ENCODE measurements at regions of chr7 and their contacts with region 1.

Region 1: DNA sequence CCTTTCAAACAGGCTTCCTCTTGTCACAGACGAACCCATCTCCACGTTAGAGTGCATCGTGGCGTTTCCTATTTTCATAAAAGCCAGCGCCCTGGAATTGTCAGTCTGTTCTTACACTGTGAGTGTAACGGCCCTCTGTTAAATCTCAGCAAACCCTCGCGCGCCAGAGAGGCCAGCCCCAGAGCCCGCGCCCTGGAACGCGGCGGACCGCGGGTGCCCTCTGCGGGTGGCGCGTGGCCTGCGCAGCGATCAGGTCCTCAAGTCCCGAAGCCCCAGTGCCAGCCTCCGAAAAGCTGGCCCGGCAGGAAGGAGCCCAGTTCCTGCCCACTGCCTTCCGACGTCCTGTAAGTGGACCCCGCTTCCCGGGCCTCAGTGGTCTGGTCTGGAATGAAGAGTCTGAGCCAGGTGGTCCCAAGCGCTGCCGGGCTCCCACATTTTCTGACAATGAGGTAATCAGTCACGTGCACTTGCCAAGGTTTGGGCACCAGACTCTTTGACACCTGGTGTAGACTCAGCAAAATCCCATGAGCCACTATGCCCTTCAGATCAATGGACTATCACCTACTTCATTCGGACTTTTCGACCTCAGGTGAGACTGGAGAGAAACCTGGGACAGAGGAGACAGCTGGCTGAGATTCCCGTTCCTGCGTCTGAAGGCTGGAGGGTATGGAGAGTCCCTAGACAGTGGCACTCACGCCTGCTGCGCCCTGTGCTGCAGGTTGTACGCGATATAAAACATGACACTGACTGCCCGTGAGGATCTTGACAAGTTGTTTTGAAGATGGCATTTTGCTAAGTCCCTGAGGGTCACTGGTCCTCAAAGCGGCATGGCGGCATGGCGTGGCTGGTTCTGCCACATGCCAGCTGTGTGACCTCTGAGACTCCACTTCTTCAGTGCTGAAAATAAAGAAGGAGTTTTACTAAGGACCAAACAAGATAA is 109.4 kb upstream of the LANCL2 start:
- DNase-seq: peak; percentile 93
- H3K4me3 ChIP-seq: peak overlapping the region; percentile 56 to 67
- H3K27ac ChIP-seq: peak overlapping the region; percentile 50 to 58; a peak in 3 of 4 replicates
- H3K4me1 ChIP-seq: peaks cover 0 to 15% of the 10 kb centered on the region in 2 experiments; a peak in 1 of 4 replicates
- H3K27me3 ChIP-seq: no peaks in the 10 kb centered on the region
- CTCF ChIP-seq: peak; percentile 99
- EP300 ChIP-seq: no peak
- RAD21 ChIP-seq: peak; percentile 99

Region 2: GRCh38 chr7:54839538-54840213 is 416.1 kb before region 1 on chr7:
- CTCF ChIA-PET with region 1: interaction called, 83 read pairs
- POLR2A ChIA-PET with region 1: no interaction called
- DNase-seq: peak; percentile 78
- H3K4me3 ChIP-seq: no peak overlapping the region
- H3K27ac ChIP-seq: no peak overlapping the region
- H3K4me1 ChIP-seq: peaks cover 3 to 6% of the 10 kb centered on the region in 2 experiments; a peak in 3 of 4 replicates
- H3K27me3 ChIP-seq: no peaks in the 10 kb centered on the region
- CTCF ChIP-seq: peak; percentile 91
- EP300 ChIP-seq: no peak
- RAD21 ChIP-seq: peak; percentile 82

Region 3: DNA sequence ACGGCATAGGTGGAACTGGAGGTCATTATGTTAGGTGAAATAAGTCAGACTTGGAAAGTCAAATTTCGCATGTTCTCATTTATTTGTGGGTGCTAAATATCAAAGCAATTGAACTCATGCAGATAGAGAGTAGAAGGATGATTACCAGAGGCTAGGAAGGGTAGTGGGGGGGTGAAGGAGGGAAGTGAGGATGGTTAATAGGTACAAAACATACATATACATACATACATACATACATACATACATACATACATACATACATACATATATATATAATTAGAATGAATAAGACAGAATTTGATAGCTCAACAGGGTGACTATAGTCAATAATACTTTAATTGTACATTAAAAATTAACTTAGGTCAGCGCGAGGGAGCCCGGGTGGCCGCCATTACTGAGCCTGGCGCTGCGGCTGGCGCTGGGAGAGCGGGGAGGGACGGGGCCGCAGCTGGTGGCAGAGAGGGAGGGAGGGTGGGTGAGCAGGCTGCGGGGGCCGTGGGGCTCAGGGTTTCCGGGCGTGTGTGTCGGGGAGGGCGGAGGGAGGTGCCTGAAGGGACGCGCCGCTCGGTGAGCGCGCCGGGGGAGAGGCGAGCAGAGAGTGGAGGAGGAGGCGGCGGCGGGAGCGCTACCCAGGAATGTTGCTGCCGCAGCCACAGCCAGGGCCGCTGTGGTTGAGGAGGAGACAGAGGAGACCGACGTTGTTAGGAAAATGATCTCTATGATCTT is 322.8 kb before region 1 on chr7:
- CTCF ChIA-PET with region 1: interaction called, 16 read pairs
- POLR2A ChIA-PET with region 1: no interaction called
- DNase-seq: peak; percentile 96
- H3K4me3 ChIP-seq: peak overlapping the region; percentile 52 to 64
- H3K27ac ChIP-seq: peak overlapping the region; percentile 49 to 81
- H3K4me1 ChIP-seq: peaks cover 0 to 4% of the 10 kb centered on the region in 2 experiments; a peak in 1 of 4 replicates
- H3K27me3 ChIP-seq: no peaks in the 10 kb centered on the region
- CTCF ChIP-seq: no peak
- EP300 ChIP-seq: peak in 1 of 2 experiments; percentile 24; a peak in 2 of 4 replicates
- RAD21 ChIP-seq: no peak

Region 4: DNA sequence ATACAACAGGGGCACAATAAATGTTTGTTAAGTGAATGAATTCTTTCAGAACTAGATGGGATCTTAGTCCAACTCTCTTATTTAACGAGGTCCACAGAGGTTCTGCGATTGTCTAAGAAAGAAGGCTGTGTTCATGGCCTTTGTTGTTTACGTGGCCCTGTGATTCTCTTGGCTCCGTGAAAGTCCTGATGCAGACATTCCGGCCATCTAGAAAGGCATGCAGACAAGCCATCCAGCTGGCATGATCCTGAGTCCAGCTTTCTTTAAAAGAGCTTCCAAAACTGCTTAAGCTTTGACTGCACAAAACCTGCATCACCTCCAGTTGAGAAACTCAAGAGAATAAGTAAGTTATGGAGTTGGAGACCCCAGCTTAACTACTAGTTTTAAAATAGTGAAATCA is 211.0 kb before region 1 on chr7:
- CTCF ChIA-PET with region 1: interaction called, 67 read pairs
- POLR2A ChIA-PET with region 1: no interaction called
- DNase-seq: no peak
- H3K4me3 ChIP-seq: no peak overlapping the region
- H3K27ac ChIP-seq: no peak overlapping the region
- H3K4me1 ChIP-seq: no peaks in the 10 kb centered on the region; a peak in 2 of 4 replicates
- H3K27me3 ChIP-seq: no peaks in the 10 kb centered on the region
- CTCF ChIP-seq: no peak
- EP300 ChIP-seq: no peak
- RAD21 ChIP-seq: no peak

Region 5: DNA sequence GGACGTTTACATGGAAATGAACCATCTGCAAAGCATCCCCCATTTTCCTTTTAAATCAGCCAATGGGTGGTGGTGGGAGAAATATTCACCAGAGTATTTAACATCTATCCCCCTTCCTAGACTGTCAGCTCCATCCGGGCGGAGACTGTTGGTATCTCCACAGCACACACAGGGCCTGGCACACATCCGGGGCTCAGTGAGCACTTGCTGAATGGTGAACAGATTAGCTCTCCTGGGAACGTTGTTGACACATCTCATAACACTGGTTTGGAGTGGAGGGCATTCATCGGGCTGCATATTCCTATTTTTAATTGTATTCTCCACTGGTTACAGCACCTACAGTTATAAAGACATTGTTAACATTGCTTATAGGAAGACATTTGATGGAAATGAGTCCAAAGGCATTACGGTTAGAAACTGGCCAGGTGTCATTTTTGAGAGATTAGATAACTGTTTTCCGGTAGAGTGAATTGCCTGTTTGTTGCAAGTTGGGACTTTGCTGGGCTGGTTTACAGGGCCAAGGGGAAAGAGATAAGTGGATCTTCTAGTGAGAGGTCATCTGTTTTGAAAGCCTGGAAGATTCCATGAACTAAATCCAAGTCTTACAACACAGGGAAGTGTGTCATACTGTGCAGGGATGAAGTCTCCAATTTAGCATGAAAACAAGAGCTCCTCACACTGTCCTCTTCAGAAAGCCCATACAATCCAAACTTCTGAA is 135.1 kb before region 1 on chr7:
- CTCF ChIA-PET with region 1: interaction called, 14 read pairs
- POLR2A ChIA-PET with region 1: no interaction called
- DNase-seq: no peak
- H3K4me3 ChIP-seq: no peak overlapping the region
- H3K27ac ChIP-seq: peak overlapping the region in 1 of 2 experiments; percentile 8; a peak in 1 of 4 replicates
- H3K4me1 ChIP-seq: peaks cover 13 to 15% of the 10 kb centered on the region in 2 experiments; a peak in 2 of 4 replicates
- H3K27me3 ChIP-seq: no peaks in the 10 kb centered on the region
- CTCF ChIP-seq: no peak
- EP300 ChIP-seq: no peak
- RAD21 ChIP-seq: no peak

Region 6: DNA sequence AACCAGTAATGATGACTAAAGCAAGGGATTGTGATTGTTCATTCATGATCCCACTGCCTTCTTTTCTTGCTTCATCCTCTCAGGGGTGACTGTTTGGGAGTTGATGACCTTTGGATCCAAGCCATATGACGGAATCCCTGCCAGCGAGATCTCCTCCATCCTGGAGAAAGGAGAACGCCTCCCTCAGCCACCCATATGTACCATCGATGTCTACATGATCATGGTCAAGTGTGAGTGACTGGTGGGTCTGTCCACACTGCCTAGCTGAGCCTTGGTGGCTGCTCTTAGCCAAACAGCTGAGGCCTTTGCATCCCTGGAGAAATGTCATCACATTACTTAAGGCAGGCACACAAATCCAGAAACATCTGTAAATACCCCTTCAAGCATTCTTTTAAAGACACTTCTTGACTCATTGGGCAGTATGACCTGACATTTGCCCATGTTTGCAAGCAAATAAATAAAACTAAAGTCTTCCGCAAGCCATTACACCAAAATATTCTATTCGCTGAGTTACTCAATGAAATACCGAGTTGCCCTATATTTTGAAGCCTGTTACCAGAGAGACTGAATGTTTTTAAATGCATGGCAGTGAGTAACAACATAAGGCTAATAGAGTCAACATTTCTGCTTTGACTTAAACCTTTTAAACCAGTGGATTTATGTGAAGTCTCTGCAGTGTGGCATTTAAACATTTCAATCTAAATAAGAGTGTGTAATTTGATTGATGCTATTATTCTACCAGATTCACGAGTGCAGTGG is 57.0 kb before region 1 on chr7:
- CTCF ChIA-PET with region 1: interaction called, 50 read pairs
- POLR2A ChIA-PET with region 1: interaction called, 3 read pairs
- DNase-seq: no peak
- H3K4me3 ChIP-seq: no peak overlapping the region
- H3K27ac ChIP-seq: no peak overlapping the region
- H3K4me1 ChIP-seq: peaks cover 5 to 24% of the 10 kb centered on the region in 2 experiments
- H3K27me3 ChIP-seq: no peaks in the 10 kb centered on the region
- CTCF ChIP-seq: no peak
- EP300 ChIP-seq: no peak
- RAD21 ChIP-seq: no peak

Region 7: GRCh38 chr7:55309040-55309991 is 53.5 kb after region 1 on chr7:
- CTCF ChIA-PET with region 1: interaction called, 12 read pairs
- POLR2A ChIA-PET with region 1: no interaction called
- DNase-seq: no peak
- H3K4me3 ChIP-seq: no peak overlapping the region
- H3K27ac ChIP-seq: peak overlapping the region; percentile 60 to 71; a peak in 2 of 4 replicates
- H3K4me1 ChIP-seq: peaks cover 0 to 20% of the 10 kb centered on the region in 2 experiments; a peak in 2 of 4 replicates
- H3K27me3 ChIP-seq: no peaks in the 10 kb centered on the region
- CTCF ChIP-seq: no peak
- EP300 ChIP-seq: no peak
- RAD21 ChIP-seq: no peak

Region 8: GRCh38 chr7:55469271-55469681 is 213.5 kb after region 1 on chr7:
- CTCF ChIA-PET with region 1: no interaction called
- POLR2A ChIA-PET with region 1: no interaction called
- DNase-seq: peak; percentile 0
- H3K4me3 ChIP-seq: no peak overlapping the region
- H3K27ac ChIP-seq: no peak overlapping the region
- H3K4me1 ChIP-seq: no peaks in the 10 kb centered on the region
- H3K27me3 ChIP-seq: no peaks in the 10 kb centered on the region
- CTCF ChIP-seq: no peak
- EP300 ChIP-seq: no peak
- RAD21 ChIP-seq: no peak

Region 9: GRCh38 chr7:55534175-55534915 is 278.6 kb after region 1 on chr7:
- CTCF ChIA-PET with region 1: no interaction called
- POLR2A ChIA-PET with region 1: no interaction called
- DNase-seq: no peak
- H3K4me3 ChIP-seq: no peak overlapping the region
- H3K27ac ChIP-seq: peak overlapping the region; percentile 24 to 31; a peak in 2 of 4 replicates
- H3K4me1 ChIP-seq: peaks cover 28 to 43% of the 10 kb centered on the region in 2 experiments
- H3K27me3 ChIP-seq: no peaks in the 10 kb centered on the region
- CTCF ChIP-seq: no peak
- EP300 ChIP-seq: peak in 1 of 2 experiments; percentile 18; a peak in 1 of 4 replicates
- RAD21 ChIP-seq: no peak

Measured in SK-N-SH (cell line).